Naive thymus-derived CD4-positive, alpha-beta T cell (primary cell): ENCODE measurements at regions of chr19 and their contacts with region 1.

Region 1: GRCh38 chr19:19821366-19821951 is at the start of gene ZNF506:
- DNase-seq: peak; percentile 83 to 98 (median 97)
- ATAC-seq: peak; percentile 91
- H3K4me3 ChIP-seq: peak within 1 kb of the TSS; percentile 69
- H3K4me3 Mint-ChIP-seq: peak within 1 kb of the TSS; percentile 97 to 100 (median 99)
- H3K27ac ChIP-seq: peak within 1 kb of the TSS; percentile 98
- H3K27ac Mint-ChIP-seq: peak within 1 kb of the TSS; percentile 99 to 100 (median 100)
- H3K4me1 ChIP-seq: peaks cover 19 to 26% of the 10 kb centered on the region in 2 donors
- H3K4me1 Mint-ChIP-seq: peaks cover 9 to 52% (median 32%) of the 10 kb centered on the region in 7 donors
- H3K27me3 ChIP-seq: no peaks in the 10 kb centered on the region
- H3K27me3 Mint-ChIP-seq: no peaks in the 10 kb centered on the region
- total RNA-seq, gene ZNF506: 20.4 to 93.9 (median 55.7) TPM

Region 2: DNA sequence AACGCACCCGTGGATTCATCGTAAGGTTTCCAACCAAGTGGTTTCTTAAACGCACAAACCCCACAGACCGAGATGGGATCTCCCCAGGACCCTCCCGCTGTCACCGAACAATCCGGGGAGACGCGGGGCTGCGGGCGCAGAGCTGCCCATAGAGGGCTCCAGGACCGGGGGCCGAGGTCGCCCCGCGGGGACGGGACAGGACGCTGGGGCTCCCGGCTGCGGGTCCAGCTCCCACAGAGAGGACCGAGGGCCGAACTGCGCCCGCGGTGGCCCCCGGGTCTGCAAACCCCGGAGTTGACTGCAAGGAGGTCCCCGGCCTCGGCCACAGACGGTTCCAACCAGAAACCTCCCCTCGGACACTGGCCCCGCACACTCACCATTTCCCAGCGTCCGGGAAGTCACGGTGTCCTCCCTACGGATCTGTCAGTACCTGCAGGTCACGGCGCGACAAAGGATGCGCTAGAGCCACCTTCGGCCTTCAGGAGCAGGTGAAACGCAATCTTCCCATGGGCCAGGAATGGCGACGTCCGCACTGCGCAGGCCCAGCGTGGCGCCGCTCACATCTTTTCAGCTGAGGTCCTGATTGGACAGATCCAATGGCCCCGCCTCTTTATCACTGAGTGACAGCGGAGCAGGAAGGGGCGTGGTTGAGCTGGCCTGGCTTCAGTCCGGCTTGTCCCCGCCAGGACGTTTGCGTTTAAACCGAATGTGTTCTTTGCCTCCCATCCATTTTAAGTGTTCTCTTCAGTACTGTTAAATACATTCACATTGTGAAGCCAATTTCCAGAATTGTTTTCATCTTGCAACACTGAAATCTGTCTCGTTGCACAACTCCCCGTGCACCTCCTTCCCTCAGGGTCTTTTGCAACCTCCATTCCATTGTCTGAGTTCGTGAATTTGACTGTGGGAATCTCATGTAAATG is 88.6 kb before region 1 on chr19 and contains the start of gene ZNF14:
- CTCF ChIA-PET with region 1: interaction called, 6 read pairs
- POLR2A ChIA-PET with region 1: interaction called, 39 read pairs
- intact Hi-C with region 1: loop called (anchors 1 to 5 kb)
- DNase-seq: peak; percentile 69 to 91 (median 89)
- ATAC-seq: peak; percentile 100
- H3K4me3 ChIP-seq: peak within 1 kb of the TSS; percentile 78
- H3K4me3 Mint-ChIP-seq: peak within 1 kb of the TSS; percentile 93 to 100 (median 98)
- H3K27ac ChIP-seq: peak within 1 kb of the TSS; percentile 87
- H3K27ac Mint-ChIP-seq: peak within 1 kb of the TSS; percentile 93 to 98 (median 95)
- H3K4me1 ChIP-seq: peaks cover 3 to 7% of the 10 kb centered on the region in 2 donors
- H3K4me1 Mint-ChIP-seq: peaks cover 16 to 39% (median 21%) of the 10 kb centered on the region in 7 donors
- H3K27me3 ChIP-seq: no peaks in the 10 kb centered on the region
- H3K27me3 Mint-ChIP-seq: no peaks in the 10 kb centered on the region
- total RNA-seq, gene ZNF14: 7.0 to 35.0 (median 30.3) TPM

Region 3: DNA sequence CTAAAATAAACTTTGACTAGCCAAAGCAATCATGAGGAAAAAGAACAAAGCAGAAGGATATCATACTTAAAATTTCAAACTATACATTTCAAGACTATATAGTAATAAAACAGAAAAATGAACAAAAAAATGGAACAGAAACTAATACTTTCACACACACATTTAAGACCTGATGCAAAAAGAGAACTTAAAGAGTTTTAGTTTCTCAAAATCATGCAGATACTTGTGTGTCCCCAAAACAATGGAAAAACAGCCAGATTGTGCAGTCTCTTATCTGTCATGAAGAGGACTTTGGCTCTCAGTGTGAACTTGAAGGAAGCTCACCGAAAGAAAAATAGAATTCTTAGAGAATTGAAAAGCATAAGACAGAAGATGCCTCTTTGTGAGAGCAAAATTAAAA is 16.0 kb before region 1 on chr19:
- CTCF ChIA-PET with region 1: interaction called, 3 read pairs
- POLR2A ChIA-PET with region 1: interaction called, 11 read pairs
- intact Hi-C with region 1: loop called in 1 of 2 experiments (anchors 2 kb)
- DNase-seq: no peak
- ATAC-seq: no peak
- H3K4me3 ChIP-seq: no peak overlapping the region
- H3K4me3 Mint-ChIP-seq: peak overlapping the region in 2 of 10 donors; percentile 17 to 29
- H3K27ac ChIP-seq: no peak overlapping the region
- H3K27ac Mint-ChIP-seq: peak overlapping the region in 2 of 9 donors; percentile 35 to 48
- H3K4me1 ChIP-seq: peaks cover 0 to 4% of the 10 kb centered on the region in 2 donors
- H3K4me1 Mint-ChIP-seq: peaks cover 0 to 33% (median 20%) of the 10 kb centered on the region in 7 donors
- H3K27me3 ChIP-seq: no peaks in the 10 kb centered on the region
- H3K27me3 Mint-ChIP-seq: no peaks in the 10 kb centered on the region

Region 4: GRCh38 chr19:19865739-19866481 is 44.5 kb after region 1 on chr19 and contains the start of gene ZNF253:
- CTCF ChIA-PET with region 1: interaction called, 5 read pairs
- POLR2A ChIA-PET with region 1: interaction called, 130 read pairs
- intact Hi-C with region 1: loop called (anchors 1 kb)
- DNase-seq: peak; percentile 76 to 95 (median 92)
- ATAC-seq: peak; percentile 95
- H3K4me3 ChIP-seq: peak within 1 kb of the TSS; percentile 93
- H3K4me3 Mint-ChIP-seq: peak within 1 kb of the TSS; percentile 98 to 100 (median 100)
- H3K27ac ChIP-seq: peak within 1 kb of the TSS; percentile 86
- H3K27ac Mint-ChIP-seq: peak within 1 kb of the TSS; percentile 96 to 100 (median 99)
- H3K4me1 ChIP-seq: peaks cover 7 to 13% of the 10 kb centered on the region in 2 donors
- H3K4me1 Mint-ChIP-seq: peaks cover 21 to 41% (median 31%) of the 10 kb centered on the region in 7 donors
- H3K27me3 ChIP-seq: no peaks in the 10 kb centered on the region
- H3K27me3 Mint-ChIP-seq: no peaks in the 10 kb centered on the region
- total RNA-seq, gene ZNF253: 9.5 to 33.8 (median 14.8) TPM

Region 5: GRCh38 chr19:19884583-19884982 is 63.1 kb after region 1 on chr19:
- CTCF ChIA-PET with region 1: no interaction called
- POLR2A ChIA-PET with region 1: no interaction called
- intact Hi-C with region 1: no loop called
- DNase-seq: no peak
- ATAC-seq: no peak
- H3K4me3 ChIP-seq: no peak overlapping the region
- H3K4me3 Mint-ChIP-seq: no peak overlapping the region
- H3K27ac ChIP-seq: no peak overlapping the region
- H3K27ac Mint-ChIP-seq: no peak overlapping the region
- H3K4me1 ChIP-seq: no peaks in the 10 kb centered on the region
- H3K4me1 Mint-ChIP-seq: no peaks in the 10 kb centered on the region
- H3K27me3 ChIP-seq: no peaks in the 10 kb centered on the region
- H3K27me3 Mint-ChIP-seq: no peaks in the 10 kb centered on the region

Region 6: GRCh38 chr19:19900729-19901444 is 79.4 kb after region 1 on chr19 and contains the start of gene ZNF93:
- CTCF ChIA-PET with region 1: no interaction called
- POLR2A ChIA-PET with region 1: interaction called, 44 read pairs
- intact Hi-C with region 1: loop called (anchors 1 kb)
- DNase-seq: peak; percentile 67 to 94 (median 91)
- ATAC-seq: peak; percentile 99
- H3K4me3 ChIP-seq: peak within 1 kb of the TSS; percentile 83
- H3K4me3 Mint-ChIP-seq: peak within 1 kb of the TSS; percentile 90 to 100 (median 97)
- H3K27ac ChIP-seq: peak within 1 kb of the TSS; percentile 77
- H3K27ac Mint-ChIP-seq: peak within 1 kb of the TSS; percentile 82 to 97 (median 92)
- H3K4me1 ChIP-seq: no peaks in the 10 kb centered on the region
- H3K4me1 Mint-ChIP-seq: peaks cover 16 to 40% (median 32%) of the 10 kb centered on the region in 7 donors
- H3K27me3 ChIP-seq: no peaks in the 10 kb centered on the region
- H3K27me3 Mint-ChIP-seq: no peaks in the 10 kb centered on the region
- total RNA-seq, gene ZNF93: 3.4 to 11.6 (median 7.2) TPM